WTC11 (cell line): ENCODE measurements at regions of chr13 and their contacts with region 1.

Region 1: DNA sequence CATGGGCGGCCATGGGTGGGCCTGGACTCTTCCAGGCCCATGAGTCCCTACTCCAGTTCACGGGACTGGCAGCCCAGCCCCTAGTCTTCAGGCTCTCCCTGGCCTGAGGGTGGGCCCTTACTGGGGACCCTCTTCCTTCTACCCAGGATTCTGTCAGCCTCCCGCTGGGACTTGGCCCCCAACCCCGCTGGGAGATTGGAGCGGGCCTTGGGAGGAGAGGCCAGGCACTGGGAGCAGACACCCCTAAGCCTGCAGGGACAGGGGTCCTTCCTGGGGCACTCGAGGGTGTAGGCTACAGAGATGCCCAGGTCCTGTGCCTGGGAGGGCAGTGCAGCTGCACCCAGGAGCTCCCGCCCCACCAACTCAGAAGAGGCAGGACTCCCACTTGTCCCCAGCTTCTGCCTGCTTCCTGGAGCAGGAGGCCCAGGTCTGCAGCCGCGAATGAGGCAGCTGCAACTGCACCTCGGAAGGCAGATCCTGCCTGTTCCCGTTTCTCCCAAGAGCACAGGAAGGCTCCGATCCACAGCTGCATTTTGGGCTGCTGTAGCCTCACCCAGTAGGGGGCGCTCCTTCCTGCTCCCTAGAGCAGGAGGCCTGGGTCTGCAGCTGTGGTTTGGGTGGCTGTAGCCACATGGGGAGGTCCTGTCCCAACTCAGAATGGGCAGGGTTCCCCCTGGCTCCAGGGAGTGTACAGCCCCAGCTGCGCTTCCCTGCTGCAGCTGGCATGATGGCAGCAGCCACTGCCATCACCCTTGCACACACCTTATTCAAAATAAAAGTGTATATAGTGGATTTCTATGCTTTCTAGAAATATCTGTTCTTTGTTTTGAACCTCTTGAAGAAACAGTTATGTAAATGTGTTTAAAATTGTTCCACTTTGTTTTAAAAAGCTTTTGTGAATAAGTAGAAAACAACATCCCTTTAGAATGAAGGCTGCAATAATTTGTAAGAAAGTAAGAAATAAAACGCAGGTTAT is 46.8 kb downstream of the TEX26 start:
- DNase-seq: peak; percentile 92
- ATAC-seq: peak; percentile 96
- H3K4me3 Mint-ChIP-seq: no peak overlapping the region
- H3K27ac Mint-ChIP-seq: no peak overlapping the region
- H3K4me1 Mint-ChIP-seq: peaks cover 16% of the 10 kb centered on the region
- H3K27me3 Mint-ChIP-seq: no peaks in the 10 kb centered on the region; the same call in 1 of the 2 replicates
- CTCF ChIP-seq: peak; percentile 83

Region 2: GRCh38 chr13:30306762-30307193 is 672.5 kb before region 1 on chr13:
- CTCF ChIA-PET with region 1: no interaction called
- POLR2A ChIA-PET with region 1: no interaction called
- DNase-seq: peak; percentile 93
- ATAC-seq: peak; percentile 93
- H3K4me3 Mint-ChIP-seq: peak overlapping the region; percentile 80
- H3K27ac Mint-ChIP-seq: peak overlapping the region; percentile 81
- H3K4me1 Mint-ChIP-seq: peaks cover 36% of the 10 kb centered on the region
- H3K27me3 Mint-ChIP-seq: no peaks in the 10 kb centered on the region
- CTCF ChIP-seq: no peak

Region 3: GRCh38 chr13:30905932-30906383 is 73.3 kb before region 1 on chr13 and contains the start of gene MEDAG:
- CTCF ChIA-PET with region 1: interaction called, 11 read pairs
- POLR2A ChIA-PET with region 1: no interaction called
- DNase-seq: peak; percentile 15
- ATAC-seq: peak; percentile 56
- H3K4me3 Mint-ChIP-seq: peak within 1 kb of the TSS; percentile 68
- H3K27ac Mint-ChIP-seq: no peak within 1 kb of the TSS
- H3K4me1 Mint-ChIP-seq: peaks cover 6% of the 10 kb centered on the region
- H3K27me3 Mint-ChIP-seq: peaks cover 52% of the 10 kb centered on the region
- CTCF ChIP-seq: no peak
- total RNA-seq, gene MEDAG: 1.9 to 2.4 TPM (median 2.1 TPM) in 3 replicates

Region 4: GRCh38 chr13:30968846-30969245 is 10.4 kb before region 1 on chr13:
- CTCF ChIA-PET with region 1: interaction called, 28 read pairs
- POLR2A ChIA-PET with region 1: no interaction called
- DNase-seq: no peak
- ATAC-seq: no peak
- H3K4me3 Mint-ChIP-seq: no peak overlapping the region
- H3K27ac Mint-ChIP-seq: no peak overlapping the region
- H3K4me1 Mint-ChIP-seq: peaks cover 3% of the 10 kb centered on the region; the same call in 1 of the 2 replicates
- H3K27me3 Mint-ChIP-seq: peaks cover 5% of the 10 kb centered on the region; the same call in 1 of the 2 replicates
- CTCF ChIP-seq: no peak

Region 5: GRCh38 chr13:31012655-31013024 is 33.4 kb after region 1 on chr13:
- CTCF ChIA-PET with region 1: interaction called, 31 read pairs
- POLR2A ChIA-PET with region 1: interaction called, 3 read pairs
- DNase-seq: no peak
- ATAC-seq: peak; percentile 29; the same call in 1 of the 2 replicates
- H3K4me3 Mint-ChIP-seq: no peak overlapping the region
- H3K27ac Mint-ChIP-seq: peak overlapping the region; percentile 14; the same call in 1 of the 2 replicates
- H3K4me1 Mint-ChIP-seq: peaks cover 33% of the 10 kb centered on the region
- H3K27me3 Mint-ChIP-seq: no peaks in the 10 kb centered on the region; the same call in 1 of the 2 replicates
- CTCF ChIP-seq: no peak

Region 6: GRCh38 chr13:31044377-31045285 is 65.4 kb after region 1 on chr13:
- CTCF ChIA-PET with region 1: interaction called, 61 read pairs
- POLR2A ChIA-PET with region 1: no interaction called
- DNase-seq: peak; percentile 86
- ATAC-seq: peak; percentile 85
- H3K4me3 Mint-ChIP-seq: peak overlapping the region; percentile 57
- H3K27ac Mint-ChIP-seq: no peak overlapping the region; the same call in 1 of the 2 replicates
- H3K4me1 Mint-ChIP-seq: peaks cover 5% of the 10 kb centered on the region; the same call in 1 of the 2 replicates
- H3K27me3 Mint-ChIP-seq: no peaks in the 10 kb centered on the region; the same call in 1 of the 2 replicates
- CTCF ChIP-seq: peak; percentile 94